Posterior cingulate gyrus (tissue), 11 donors: ENCODE measurements at regions of chr12 and their contacts with region 1.

Region 1: GRCh38 chr12:85575120-85576096 is 260.8 kb downstream of the RASSF9 start:
- DNase-seq: peak in 4 of 10 donors; percentile 16 to 46 (median 24)

Region 2: DNA sequence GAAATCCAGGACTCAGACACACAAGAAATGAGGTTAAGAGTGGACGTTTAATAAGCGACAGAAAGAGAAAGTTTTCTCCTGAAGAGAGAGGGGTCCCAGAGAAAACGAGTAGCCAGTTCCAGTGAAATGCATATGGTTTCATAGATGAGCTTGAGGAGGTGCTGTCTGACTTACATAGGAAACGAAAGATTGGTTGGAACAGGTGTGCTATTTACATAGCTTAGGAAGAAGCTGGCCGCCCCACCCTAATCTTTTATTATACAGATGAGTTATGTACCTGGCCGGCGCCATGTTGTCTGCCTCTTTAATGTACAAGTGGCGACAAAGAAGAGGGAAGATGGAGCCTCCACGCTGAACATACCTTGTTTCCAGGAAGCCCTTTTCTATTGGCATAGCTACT is 885.8 kb before region 1 on chr12:
- intact Hi-C with region 1: no loop called
- DNase-seq: no peak

Region 3: DNA sequence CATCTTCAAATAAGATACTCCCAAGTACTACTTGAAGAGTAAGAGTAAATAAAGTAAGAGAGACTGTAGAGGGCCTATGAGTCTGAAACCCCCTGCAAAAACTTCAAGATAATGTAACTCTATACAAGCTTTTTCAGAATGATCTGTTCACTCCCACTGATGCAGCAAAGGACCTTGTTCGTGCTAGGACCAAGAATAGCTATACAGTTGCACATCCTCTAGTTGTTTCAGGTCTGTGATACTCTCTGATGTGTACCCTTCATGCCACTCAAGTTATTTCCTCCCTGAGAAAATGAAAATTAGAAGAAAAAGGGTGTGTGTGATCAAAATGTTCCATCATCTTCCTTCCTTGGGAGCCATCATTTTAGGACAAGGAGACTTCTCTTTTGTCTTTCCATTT is 91.0 kb before region 1 on chr12:
- intact Hi-C with region 1: no loop called
- DNase-seq: no peak

Region 4: GRCh38 chr12:85531341-85531740 is 44.1 kb before region 1 on chr12:
- intact Hi-C with region 1: no loop called
- DNase-seq: no peak

Region 5: DNA sequence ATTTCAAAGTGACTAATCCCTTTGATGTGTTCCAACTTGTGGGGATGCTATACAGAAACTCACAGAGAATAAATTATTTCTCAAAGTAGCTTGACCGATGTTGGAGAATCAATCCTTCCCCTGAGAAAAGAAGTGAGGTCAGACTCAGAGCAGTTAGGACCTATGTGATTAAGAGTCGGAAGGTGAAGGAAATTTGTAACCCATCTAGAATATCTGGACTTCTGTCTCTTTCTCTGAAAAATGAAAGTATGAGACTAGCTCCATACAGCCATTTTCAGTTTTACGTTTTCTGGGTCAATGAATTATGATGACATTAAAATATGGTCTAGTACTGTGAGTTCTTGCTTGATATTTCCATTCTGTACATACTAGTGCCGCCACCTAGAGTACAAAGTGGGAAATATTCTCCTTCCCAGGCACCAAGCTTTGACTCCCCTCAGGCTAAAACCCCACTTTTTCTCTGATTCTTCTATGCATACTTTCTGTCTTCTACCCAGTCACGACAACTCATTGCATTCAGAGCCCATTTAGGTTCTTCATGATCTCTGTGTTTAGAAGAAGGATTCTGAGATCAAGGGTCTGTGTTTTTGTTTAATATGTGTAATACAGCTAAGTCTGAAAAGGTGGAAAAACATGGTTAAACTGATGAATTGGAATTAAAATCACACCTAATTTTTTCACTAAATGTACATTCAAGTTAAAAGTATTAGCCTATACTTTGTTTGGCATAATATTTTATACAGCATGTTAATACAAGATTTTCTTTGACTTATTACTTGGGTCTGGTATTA is 291.8 kb after region 1 on chr12:
- intact Hi-C with region 1: loop called (anchors 5 kb)
- DNase-seq: no peak